ENCODE measurements at regions of chr16 and their contacts with region 1.

Region 1: DNA sequence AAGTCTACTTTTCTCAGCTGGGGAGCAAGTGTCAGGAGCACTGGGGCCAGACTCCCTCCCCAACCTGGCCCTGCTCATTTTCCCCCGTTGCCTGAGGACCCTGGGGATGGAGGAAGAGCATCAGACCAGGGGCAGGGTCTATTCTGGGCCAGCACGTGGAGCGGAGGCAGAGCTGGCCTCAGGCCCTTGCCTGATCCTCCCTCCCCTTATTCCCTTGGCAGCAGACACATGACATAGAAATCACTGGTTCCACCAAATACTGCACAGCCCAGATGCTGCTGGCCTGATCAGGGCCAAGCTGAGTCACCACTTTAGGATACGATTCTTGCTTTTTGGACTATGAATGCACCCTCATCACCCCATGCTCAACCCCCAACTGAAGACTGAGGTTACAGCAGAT is 15.8 kb upstream of the AGRP start:
- DNase-seq: no peak
- H3K4me3 Mint-ChIP-seq: no peak overlapping the region
- H3K27ac Mint-ChIP-seq: no peak overlapping the region
- H3K4me1 Mint-ChIP-seq: peaks cover 8% of the 10 kb centered on the region
- H3K27me3 Mint-ChIP-seq: no peaks in the 10 kb centered on the region

Region 2: DNA sequence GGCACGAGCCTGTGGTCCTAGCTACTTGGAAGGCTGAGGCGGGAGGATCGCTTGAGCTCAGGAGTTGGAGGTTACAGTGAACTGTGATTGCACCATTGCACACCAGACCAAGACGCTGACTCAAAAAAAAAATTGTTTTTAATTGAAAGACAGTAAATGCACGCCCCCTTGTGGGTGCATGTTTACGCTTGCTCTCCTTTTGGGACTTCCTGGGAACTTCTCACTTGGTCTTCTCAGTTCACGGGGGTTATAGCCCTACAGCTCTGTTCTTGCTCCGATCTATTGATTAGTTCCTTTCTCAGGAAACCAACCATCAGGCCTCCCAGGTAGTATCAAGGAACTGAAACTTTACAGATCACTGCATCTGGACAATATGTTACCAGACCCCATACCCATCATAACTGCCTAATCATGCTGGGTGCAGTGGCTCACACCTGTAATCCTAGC is 15.3 kb after region 1 on chr16:
- intact Hi-C with region 1: loop called (anchors 1 kb)
- DNase-seq: peak; percentile 71
- H3K4me3 Mint-ChIP-seq: no peak overlapping the region
- H3K27ac Mint-ChIP-seq: no peak overlapping the region
- H3K4me1 Mint-ChIP-seq: peaks cover 11% of the 10 kb centered on the region
- H3K27me3 Mint-ChIP-seq: no peaks in the 10 kb centered on the region